PC-9 (cell line): ENCODE measurements at regions of chr12 and their contacts with region 1.

Region 1: GRCh38 chr12:66107451-66107915 is 23.1 kb downstream of the LLPH start:
- DNase-seq: peak; percentile 52 to 77
- H3K4me3 ChIP-seq: no peak overlapping the region
- H3K27ac ChIP-seq: no peak overlapping the region
- H3K4me1 ChIP-seq: no peaks in the 10 kb centered on the region
- H3K27me3 ChIP-seq: no peaks in the 10 kb centered on the region
- CTCF ChIP-seq: peak; percentile 87

Region 2: DNA sequence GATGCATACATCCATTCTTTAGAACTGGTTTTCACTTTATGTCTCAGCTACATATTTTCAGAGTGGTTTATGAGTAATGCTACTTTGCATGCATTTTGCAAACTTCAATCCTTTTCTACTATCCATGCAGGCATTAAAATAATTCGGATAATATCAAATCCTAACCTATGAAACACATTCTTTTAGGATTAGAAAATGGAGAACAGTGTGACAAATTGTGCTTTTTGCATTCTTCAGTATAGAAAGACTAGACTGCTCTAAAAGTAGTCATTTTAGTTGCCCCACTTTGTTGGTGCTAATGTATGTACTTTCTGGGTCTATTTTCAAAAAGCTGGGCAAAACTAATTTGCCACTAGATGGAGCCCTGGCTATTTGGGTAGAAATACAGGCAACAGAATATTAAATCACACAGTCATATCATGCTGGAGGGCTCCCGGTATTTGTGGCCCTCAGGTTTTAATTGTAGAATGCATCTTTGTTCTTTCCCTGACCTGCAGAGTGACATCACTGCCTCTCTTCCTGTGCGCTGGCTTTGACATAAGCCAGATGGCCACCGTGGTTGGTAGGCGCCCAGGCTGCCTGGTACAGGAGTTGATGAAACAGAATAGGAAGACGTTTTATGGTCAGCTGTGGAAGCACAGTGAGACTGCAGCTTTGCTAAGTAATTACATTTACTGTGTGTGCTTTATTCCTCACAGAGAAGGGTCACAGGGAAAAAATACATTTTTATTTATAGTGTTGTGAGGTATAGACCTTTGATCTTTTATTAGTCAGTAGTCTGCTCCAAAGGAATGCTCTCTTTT is 800.9 kb before region 1 on chr12:
- CTCF ChIA-PET with region 1: interaction called, 3 read pairs
- POLR2A ChIA-PET with region 1: no interaction called
- intact Hi-C with region 1: loop called (anchors 1 kb)
- DNase-seq: peak in 1 of 2 experiments; percentile 32
- H3K4me3 ChIP-seq: no peak overlapping the region
- H3K27ac ChIP-seq: no peak overlapping the region
- H3K4me1 ChIP-seq: no peaks in the 10 kb centered on the region
- H3K27me3 ChIP-seq: no peaks in the 10 kb centered on the region
- CTCF ChIP-seq: peak; percentile 76